Activated CD4-positive, alpha-beta T cell treated with anti-CD3 and anti-CD28 coated beads for 36 hours (primary cell): ENCODE measurements at regions of chr1 and their contacts with region 1.

Region 1: DNA sequence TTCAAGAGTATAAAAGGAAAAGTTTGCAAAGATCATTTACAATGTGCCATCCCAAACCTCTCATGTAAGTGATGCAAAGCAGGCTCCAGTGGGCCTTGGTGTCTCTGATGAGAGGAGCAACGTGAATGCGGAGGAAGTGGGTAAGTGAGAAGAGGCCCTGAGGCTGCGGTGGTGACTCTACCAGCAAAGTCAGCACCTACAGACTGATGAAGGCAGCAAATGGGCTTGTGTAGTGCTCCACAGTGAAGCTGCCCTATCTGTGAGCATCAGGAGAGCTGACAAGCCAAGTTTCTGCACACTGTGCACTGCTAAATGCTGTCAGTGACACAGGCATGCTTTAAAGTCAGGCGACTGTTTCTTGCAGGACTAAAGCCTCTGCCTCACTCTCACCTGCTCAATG is 15.6 kb upstream of the RAP1A start:
- DNase-seq: peak; percentile 89
- ATAC-seq: peak; percentile 81
- H3K4me3 Mint-ChIP-seq: peak overlapping the region; percentile 40
- H3K27ac Mint-ChIP-seq: peak overlapping the region; percentile 96
- H3K4me1 Mint-ChIP-seq: peaks cover 77% of the 10 kb centered on the region
- H3K27me3 Mint-ChIP-seq: no peaks in the 10 kb centered on the region

Region 2: GRCh38 chr1:111203681-111204200 is 400.2 kb before region 1 on chr1:
- CTCF ChIA-PET with region 1: no interaction called
- POLR2A ChIA-PET with region 1: no interaction called
- intact Hi-C with region 1: loop called in 1 of 2 experiments (anchors 5 kb)
- DNase-seq: peak; percentile 92
- ATAC-seq: peak; percentile 27
- H3K4me3 Mint-ChIP-seq: peak overlapping the region; percentile 96
- H3K27ac Mint-ChIP-seq: peak overlapping the region; percentile 98
- H3K4me1 Mint-ChIP-seq: peaks cover 56% of the 10 kb centered on the region
- H3K27me3 Mint-ChIP-seq: no peaks in the 10 kb centered on the region

Region 3: GRCh38 chr1:111214074-111214801 is 389.7 kb before region 1 on chr1:
- CTCF ChIA-PET with region 1: interaction called, 3 read pairs
- POLR2A ChIA-PET with region 1: no interaction called
- intact Hi-C with region 1: loop called (anchors 2 to 5 kb)
- DNase-seq: no peak
- ATAC-seq: peak; percentile 18
- H3K4me3 Mint-ChIP-seq: peak overlapping the region; percentile 68
- H3K27ac Mint-ChIP-seq: peak overlapping the region; percentile 97
- H3K4me1 Mint-ChIP-seq: peaks cover 80% of the 10 kb centered on the region
- H3K27me3 Mint-ChIP-seq: no peaks in the 10 kb centered on the region

Region 4: DNA sequence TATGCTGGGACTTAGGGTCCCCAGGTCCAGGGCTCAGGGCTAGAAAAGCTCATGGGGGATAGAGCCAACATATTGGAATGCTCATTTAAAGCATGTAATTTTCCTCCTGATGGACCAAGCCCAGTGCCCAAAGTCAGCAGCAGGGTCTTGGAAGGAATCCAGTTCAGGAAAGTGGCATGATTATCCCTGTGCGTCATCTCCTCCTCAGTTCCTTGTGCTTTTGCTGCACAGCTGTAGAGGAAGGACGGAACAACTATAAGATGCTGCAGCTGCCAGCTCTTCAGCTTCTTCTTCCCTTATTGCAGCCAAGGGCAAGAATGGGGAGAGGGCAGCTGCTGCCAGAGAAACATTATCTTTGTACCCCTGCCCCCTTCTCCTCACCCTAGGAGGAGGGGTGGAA is 234.8 kb before region 1 on chr1:
- CTCF ChIA-PET with region 1: no interaction called
- POLR2A ChIA-PET with region 1: no interaction called
- intact Hi-C with region 1: no loop called
- DNase-seq: no peak
- ATAC-seq: no peak
- H3K4me3 Mint-ChIP-seq: no peak overlapping the region
- H3K27ac Mint-ChIP-seq: no peak overlapping the region
- H3K4me1 Mint-ChIP-seq: no peaks in the 10 kb centered on the region
- H3K27me3 Mint-ChIP-seq: peaks cover 12% of the 10 kb centered on the region

Region 5: GRCh38 chr1:111592389-111593361 is 11.3 kb before region 1 on chr1:
- CTCF ChIA-PET with region 1: interaction called, 23 read pairs
- POLR2A ChIA-PET with region 1: interaction called, 19 read pairs
- intact Hi-C with region 1: loop called (anchors 1 kb)
- DNase-seq: peak; percentile 98
- ATAC-seq: peak; percentile 93
- H3K4me3 Mint-ChIP-seq: peak overlapping the region; percentile 63
- H3K27ac Mint-ChIP-seq: peak overlapping the region; percentile 95
- H3K4me1 Mint-ChIP-seq: peaks cover 73% of the 10 kb centered on the region
- H3K27me3 Mint-ChIP-seq: no peaks in the 10 kb centered on the region

Region 6: GRCh38 chr1:111619635-111620440 is 15.9 kb after region 1 on chr1 and contains the start of gene RAP1A:
- CTCF ChIA-PET with region 1: interaction called, 16 read pairs
- POLR2A ChIA-PET with region 1: interaction called, 16 read pairs
- intact Hi-C with region 1: loop called (anchors 1 kb)
- DNase-seq: peak; percentile 98
- ATAC-seq: peak; percentile 71
- H3K4me3 Mint-ChIP-seq: peak within 1 kb of the TSS; percentile 96
- H3K27ac Mint-ChIP-seq: peak within 1 kb of the TSS; percentile 97
- H3K4me1 Mint-ChIP-seq: peaks cover 72% of the 10 kb centered on the region
- H3K27me3 Mint-ChIP-seq: no peaks in the 10 kb centered on the region
- total RNA-seq, gene RAP1A: 182 to 214 TPM

Region 7: GRCh38 chr1:111628153-111628552 is 24.2 kb after region 1 on chr1:
- CTCF ChIA-PET with region 1: interaction called, 14 read pairs
- POLR2A ChIA-PET with region 1: interaction called, 5 read pairs
- intact Hi-C with region 1: loop called in 1 of 2 experiments (anchors 1 kb)
- DNase-seq: no peak
- ATAC-seq: no peak
- H3K4me3 Mint-ChIP-seq: peak overlapping the region; percentile 57
- H3K27ac Mint-ChIP-seq: peak overlapping the region; percentile 88
- H3K4me1 Mint-ChIP-seq: peaks cover 90% of the 10 kb centered on the region
- H3K27me3 Mint-ChIP-seq: no peaks in the 10 kb centered on the region

Region 8: DNA sequence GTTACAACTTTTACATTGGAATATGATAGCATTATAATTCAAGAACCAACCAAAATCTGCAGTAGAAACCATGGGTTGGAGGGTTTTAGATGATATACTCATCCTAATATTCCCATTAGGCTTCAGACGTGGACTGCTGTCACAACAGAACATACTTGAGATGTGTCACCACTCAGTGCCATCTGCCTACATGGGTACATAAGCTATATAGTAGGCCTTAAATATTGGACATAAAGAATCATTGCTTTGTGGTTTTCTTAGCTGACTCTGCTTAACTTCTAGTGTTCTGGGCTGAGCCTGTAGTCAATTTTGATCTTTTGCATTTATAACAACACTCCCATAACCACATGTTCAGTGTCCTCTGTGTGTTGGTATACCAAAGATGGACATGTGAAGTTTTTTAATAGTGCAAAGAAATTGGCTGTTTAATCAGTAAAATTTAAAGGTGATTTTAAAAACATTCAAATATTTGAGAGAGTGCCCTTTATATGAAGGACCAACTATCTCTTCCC is 29.8 kb after region 1 on chr1:
- CTCF ChIA-PET with region 1: interaction called, 14 read pairs
- POLR2A ChIA-PET with region 1: no interaction called
- intact Hi-C with region 1: loop called in 1 of 2 experiments (anchors 1 kb)
- DNase-seq: no peak
- ATAC-seq: no peak
- H3K4me3 Mint-ChIP-seq: no peak overlapping the region
- H3K27ac Mint-ChIP-seq: no peak overlapping the region
- H3K4me1 Mint-ChIP-seq: peaks cover 84% of the 10 kb centered on the region
- H3K27me3 Mint-ChIP-seq: no peaks in the 10 kb centered on the region

Region 9: GRCh38 chr1:111696330-111696729 is 92.4 kb after region 1 on chr1:
- CTCF ChIA-PET with region 1: no interaction called
- POLR2A ChIA-PET with region 1: no interaction called
- intact Hi-C with region 1: no loop called
- DNase-seq: no peak
- ATAC-seq: no peak
- H3K4me3 Mint-ChIP-seq: no peak overlapping the region
- H3K27ac Mint-ChIP-seq: peak overlapping the region; percentile 26
- H3K4me1 Mint-ChIP-seq: peaks cover 48% of the 10 kb centered on the region
- H3K27me3 Mint-ChIP-seq: no peaks in the 10 kb centered on the region

Region 10: GRCh38 chr1:112444269-112444668 is 840.3 kb after region 1 on chr1:
- CTCF ChIA-PET with region 1: no interaction called
- POLR2A ChIA-PET with region 1: no interaction called
- intact Hi-C with region 1: no loop called
- DNase-seq: no peak
- ATAC-seq: no peak
- H3K4me3 Mint-ChIP-seq: no peak overlapping the region
- H3K27ac Mint-ChIP-seq: no peak overlapping the region
- H3K4me1 Mint-ChIP-seq: no peaks in the 10 kb centered on the region
- H3K27me3 Mint-ChIP-seq: peaks cover 2% of the 10 kb centered on the region